ENCODE measurements at regions of chr3 and their contacts with region 1.

Region 1: GRCh38 chr3:56494686-56495322 is 26.5 kb upstream of the ERC2 start:
- DNase-seq: peak; percentile 71
- H3K4me3 ChIP-seq: no peak overlapping the region
- H3K27ac ChIP-seq: no peak overlapping the region
- H3K4me1 ChIP-seq: no peaks in the 10 kb centered on the region
- H3K27me3 ChIP-seq: peaks cover 2% of the 10 kb centered on the region in 2 experiments
- CTCF ChIP-seq: peak; percentile 90
- POLR2A ChIP-seq: no peak

Region 2: GRCh38 chr3:56131974-56132590 is 362.7 kb before region 1 on chr3:
- CTCF ChIA-PET with region 1: no interaction called
- POLR2A ChIA-PET with region 1: no interaction called
- dilution Hi-C with region 1: no loop called
- intact Hi-C with region 1: no loop called
- DNase-seq: peak; percentile 92
- H3K4me3 ChIP-seq: no peak overlapping the region
- H3K27ac ChIP-seq: peak overlapping the region; percentile 48
- H3K4me1 ChIP-seq: peaks cover 26% of the 10 kb centered on the region
- H3K27me3 ChIP-seq: no peaks in the 10 kb centered on the region
- CTCF ChIP-seq: no peak
- POLR2A ChIP-seq: no peak

Region 3: DNA sequence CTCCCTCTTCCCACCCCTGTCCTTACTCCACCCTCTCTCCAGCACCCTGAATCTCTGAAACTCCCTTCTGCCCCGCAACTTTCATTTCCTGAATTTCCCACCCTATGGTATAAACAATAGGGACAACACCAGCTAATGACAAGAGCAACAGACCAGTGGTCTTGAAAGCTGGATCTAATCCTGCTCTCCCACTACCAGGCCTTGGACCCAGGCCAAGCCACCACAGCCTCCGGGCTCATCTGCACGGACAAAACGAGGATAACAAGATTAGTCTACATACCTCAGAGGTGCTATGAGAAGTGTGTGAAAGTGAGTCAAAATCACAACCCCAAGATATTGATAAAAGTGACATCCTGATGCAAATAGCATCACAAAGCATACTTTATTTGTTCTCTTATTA is 155.1 kb before region 1 on chr3:
- CTCF ChIA-PET with region 1: interaction called, 62 read pairs
- POLR2A ChIA-PET with region 1: no interaction called
- dilution Hi-C with region 1: no loop called
- intact Hi-C with region 1: loop called (anchors 1 kb)
- DNase-seq: no peak
- H3K4me3 ChIP-seq: no peak overlapping the region
- H3K27ac ChIP-seq: no peak overlapping the region
- H3K4me1 ChIP-seq: no peaks in the 10 kb centered on the region
- H3K27me3 ChIP-seq: no peaks in the 10 kb centered on the region
- CTCF ChIP-seq: no peak
- POLR2A ChIP-seq: no peak

Region 4: GRCh38 chr3:56347219-56347871 is 147.5 kb before region 1 on chr3:
- CTCF ChIA-PET with region 1: interaction called, 62 read pairs
- POLR2A ChIA-PET with region 1: no interaction called
- dilution Hi-C with region 1: no loop called
- intact Hi-C with region 1: loop called (anchors 1 kb)
- DNase-seq: peak; percentile 24
- H3K4me3 ChIP-seq: no peak overlapping the region
- H3K27ac ChIP-seq: no peak overlapping the region
- H3K4me1 ChIP-seq: no peaks in the 10 kb centered on the region
- H3K27me3 ChIP-seq: no peaks in the 10 kb centered on the region
- CTCF ChIP-seq: peak; percentile 42 to 52
- POLR2A ChIP-seq: no peak

Region 5: DNA sequence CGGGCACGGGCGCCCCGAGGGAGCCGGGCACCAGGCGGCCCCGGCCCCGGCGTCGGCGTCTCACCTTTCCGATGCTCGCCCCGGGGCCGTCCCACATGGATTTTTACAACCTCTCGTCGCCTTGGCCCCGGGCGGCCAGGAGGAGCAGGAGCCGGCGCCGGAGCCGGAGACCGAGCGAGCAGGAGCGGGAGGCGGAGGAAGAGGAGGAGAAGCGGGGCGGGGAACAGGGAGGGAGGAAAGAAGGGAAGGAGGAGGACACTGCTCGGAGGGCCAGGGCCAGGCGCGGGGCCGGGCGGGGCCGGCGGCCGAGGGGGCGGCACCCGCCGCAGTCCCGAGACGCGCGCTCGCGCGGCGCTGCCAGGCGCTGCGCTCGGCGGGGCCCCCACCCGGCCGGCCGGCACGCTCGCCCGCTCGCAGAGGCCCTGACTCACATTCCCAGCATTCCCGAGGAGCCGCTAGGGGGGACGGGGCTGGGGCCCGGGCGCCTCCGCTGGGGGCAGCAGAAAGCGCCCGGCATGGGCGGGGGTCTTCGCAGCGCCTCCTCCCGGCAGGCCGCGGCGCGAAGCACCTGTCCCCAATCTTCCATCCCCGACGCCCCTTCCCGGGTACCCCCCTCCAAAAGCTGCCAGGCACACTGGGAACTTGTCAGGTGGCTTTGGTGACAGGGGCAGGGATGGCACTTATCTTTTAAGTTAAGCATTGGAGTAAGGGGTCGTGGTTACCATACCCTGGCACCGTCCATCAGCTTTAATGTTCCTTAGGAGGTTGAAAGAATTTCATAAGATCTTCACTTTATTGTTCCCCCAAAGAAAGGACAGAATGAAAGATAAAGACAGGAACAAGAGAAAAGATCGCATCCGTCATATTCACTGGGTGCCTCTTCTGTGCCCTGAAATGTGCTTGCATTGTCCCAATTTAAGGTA is 26.4 kb before region 1 on chr3 and contains the start of gene ERC2:
- CTCF ChIA-PET with region 1: interaction called, 15 read pairs
- POLR2A ChIA-PET with region 1: no interaction called
- dilution Hi-C with region 1: no loop called
- intact Hi-C with region 1: loop called (anchors 1 kb)
- DNase-seq: peak; percentile 68
- H3K4me3 ChIP-seq: peak within 1 kb of the TSS; percentile 65 to 94 (median 83)
- H3K27ac ChIP-seq: no peak within 1 kb of the TSS
- H3K4me1 ChIP-seq: peaks cover 14% of the 10 kb centered on the region
- H3K27me3 ChIP-seq: peaks cover 0 to 9% of the 10 kb centered on the region in 2 experiments
- CTCF ChIP-seq: peak; percentile 38 to 75
- POLR2A ChIP-seq: no peak
- total RNA-seq, gene ERC2: 15.5 and 17.8 TPM in 2 replicates

Region 6: DNA sequence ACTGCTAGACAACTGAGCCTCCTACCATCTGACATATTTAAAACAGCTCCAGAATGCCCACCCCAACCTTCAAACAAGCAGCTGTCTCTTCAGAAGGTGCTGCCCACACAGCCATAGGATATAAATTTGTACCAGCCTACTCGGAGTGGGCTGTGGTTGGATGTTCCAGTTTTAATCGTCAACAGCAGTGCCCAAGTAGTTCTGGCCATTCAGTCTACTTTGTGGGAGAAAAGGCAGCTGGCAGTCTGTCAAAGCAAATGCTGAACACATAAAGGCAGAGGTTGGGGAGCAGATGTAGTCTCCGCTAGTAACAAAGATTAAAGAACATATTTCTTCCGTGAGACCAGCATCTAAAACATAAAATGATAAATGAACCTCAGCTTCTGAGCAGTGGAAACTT is 10.7 kb before region 1 on chr3:
- CTCF ChIA-PET with region 1: interaction called, 22 read pairs
- POLR2A ChIA-PET with region 1: no interaction called
- dilution Hi-C with region 1: no loop called
- intact Hi-C with region 1: no loop called
- DNase-seq: no peak
- H3K4me3 ChIP-seq: no peak overlapping the region
- H3K27ac ChIP-seq: no peak overlapping the region
- H3K4me1 ChIP-seq: no peaks in the 10 kb centered on the region
- H3K27me3 ChIP-seq: peaks cover 0 to 4% of the 10 kb centered on the region in 2 experiments
- CTCF ChIP-seq: no peak
- POLR2A ChIP-seq: no peak

Measured in endothelial cell of umbilical vein (primary cell).